CD4-positive, alpha-beta T cell (primary cell): ENCODE measurements at regions of chr2 and their contacts with region 1.

Region 1: DNA sequence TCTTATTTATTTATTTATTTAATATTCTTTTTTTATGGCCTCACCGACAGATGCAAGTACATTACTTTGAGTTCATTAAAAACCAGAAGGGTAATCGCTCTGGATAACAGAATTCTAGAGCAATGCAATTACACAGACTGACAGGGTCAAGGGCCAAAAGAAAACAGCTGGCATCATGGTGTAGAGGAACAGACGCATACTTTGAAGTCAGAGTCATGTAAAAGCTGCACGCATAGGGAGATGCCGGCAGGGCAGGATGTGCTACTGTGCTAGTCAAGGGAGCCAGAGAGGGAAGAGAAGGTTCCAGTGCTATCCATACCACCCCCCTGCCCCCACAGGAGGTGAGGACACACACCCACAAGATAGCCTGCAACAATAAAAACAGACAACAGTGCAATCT is 115.2 kb upstream of the TFCP2L1 start:
- DNase-seq: no peak
- ATAC-seq: no peak
- H3K4me3 ChIP-seq: no peak overlapping the region
- H3K4me3 Mint-ChIP-seq: no peak overlapping the region
- H3K27ac ChIP-seq: no peak overlapping the region
- H3K27ac Mint-ChIP-seq: no peak overlapping the region
- H3K4me1 ChIP-seq: no peaks in the 10 kb centered on the region
- H3K4me1 Mint-ChIP-seq: no peaks in the 10 kb centered on the region
- H3K27me3 ChIP-seq: no peaks in the 10 kb centered on the region
- H3K27me3 Mint-ChIP-seq: no peaks in the 10 kb centered on the region
- CTCF ChIP-seq: no peak

Region 2: GRCh38 chr2:121372721-121373353 is 27.4 kb before region 1 on chr2:
- CTCF ChIA-PET with region 1: no interaction called
- POLR2A ChIA-PET with region 1: no interaction called
- intact Hi-C with region 1: no loop called
- DNase-seq: no peak
- ATAC-seq: no peak
- H3K4me3 ChIP-seq: no peak overlapping the region
- H3K4me3 Mint-ChIP-seq: no peak overlapping the region
- H3K27ac ChIP-seq: no peak overlapping the region
- H3K27ac Mint-ChIP-seq: no peak overlapping the region
- H3K4me1 ChIP-seq: no peaks in the 10 kb centered on the region
- H3K4me1 Mint-ChIP-seq: no peaks in the 10 kb centered on the region
- H3K27me3 ChIP-seq: no peaks in the 10 kb centered on the region
- H3K27me3 Mint-ChIP-seq: no peaks in the 10 kb centered on the region
- CTCF ChIP-seq: no peak

Region 3: GRCh38 chr2:121454549-121455090 is 54.4 kb after region 1 on chr2:
- CTCF ChIA-PET with region 1: no interaction called
- POLR2A ChIA-PET with region 1: no interaction called
- intact Hi-C with region 1: loop called in 1 of 2 experiments (anchors 5 kb)
- DNase-seq: no peak
- ATAC-seq: no peak
- H3K4me3 ChIP-seq: no peak overlapping the region
- H3K4me3 Mint-ChIP-seq: no peak overlapping the region
- H3K27ac ChIP-seq: no peak overlapping the region
- H3K27ac Mint-ChIP-seq: no peak overlapping the region
- H3K4me1 ChIP-seq: no peaks in the 10 kb centered on the region
- H3K4me1 Mint-ChIP-seq: no peaks in the 10 kb centered on the region
- H3K27me3 ChIP-seq: no peaks in the 10 kb centered on the region
- H3K27me3 Mint-ChIP-seq: no peaks in the 10 kb centered on the region
- CTCF ChIP-seq: no peak